ENCODE measurements at regions of chr15 and their contacts with region 1.

Region 1: GRCh38 chr15:71251584-71252043 is 136.3 kb downstream of the THSD4 start:
- DNase-seq: no peak
- ATAC-seq: peak in 7 of 8 donors; percentile 16 to 65 (median 38)
- H3K4me3 ChIP-seq: no peak overlapping the region
- H3K27ac ChIP-seq: peak overlapping the region; percentile 44 to 72 (median 68)
- H3K4me1 ChIP-seq: peaks cover 6 to 50% (median 44%) of the 10 kb centered on the region in 9 donors
- H3K27me3 ChIP-seq: no peaks in the 10 kb centered on the region
- CTCF ChIP-seq: no peak

Region 2: DNA sequence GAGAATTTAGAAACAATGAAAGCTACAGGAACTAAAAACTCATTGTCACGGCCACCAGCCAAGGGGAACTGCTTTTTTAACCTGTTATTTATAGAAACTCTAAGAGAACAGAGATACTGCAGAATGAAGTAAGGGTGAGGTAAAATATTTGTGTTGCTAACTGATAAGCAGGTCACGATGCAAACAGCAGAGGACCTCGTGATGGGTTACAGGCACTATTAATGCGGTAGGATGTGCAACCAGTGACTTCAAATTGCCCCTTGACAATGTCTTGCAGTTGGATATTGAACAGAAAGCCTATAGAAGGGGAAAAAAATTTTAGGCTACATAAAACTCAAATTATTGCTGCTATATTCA is 83.2 kb before region 1 on chr15:
- intact Hi-C with region 1: no loop called
- DNase-seq: peak in 1 of 2 donors; percentile 49
- ATAC-seq: peak; percentile 49 to 99 (median 94)
- H3K4me3 ChIP-seq: no peak overlapping the region
- H3K27ac ChIP-seq: peak overlapping the region; percentile 45 to 81 (median 72)
- H3K4me1 ChIP-seq: peaks cover 0 to 34% (median 9%) of the 10 kb centered on the region in 9 donors
- H3K27me3 ChIP-seq: no peaks in the 10 kb centered on the region
- CTCF ChIP-seq: no peak

Region 3: GRCh38 chr15:71272932-71273331 is 21.3 kb after region 1 on chr15:
- intact Hi-C with region 1: loop called in 1 of 10 experiments (anchors 1 kb)
- DNase-seq: no peak
- ATAC-seq: no peak
- H3K4me3 ChIP-seq: no peak overlapping the region
- H3K27ac ChIP-seq: peak overlapping the region in 2 of 10 donors; percentile 35 to 53
- H3K4me1 ChIP-seq: peaks cover 0 to 31% (median 1%) of the 10 kb centered on the region in 9 donors
- H3K27me3 ChIP-seq: no peaks in the 10 kb centered on the region
- CTCF ChIP-seq: no peak

Measured in heart right ventricle (tissue), 16 donors.